SK-N-SH (cell line): ENCODE measurements at regions of chr1 and their contacts with region 1.

Region 1: GRCh38 chr1:111755331-111756123 is at the start of gene DDX20:
- DNase-seq: peak; percentile 97
- H3K4me3 ChIP-seq: peak within 1 kb of the TSS; percentile 96 to 99
- H3K27ac ChIP-seq: peak within 1 kb of the TSS; percentile 96 to 99
- H3K4me1 ChIP-seq: peaks cover 9 to 11% of the 10 kb centered on the region in 2 experiments; a peak in 3 of 4 replicates
- H3K27me3 ChIP-seq: no peaks in the 10 kb centered on the region
- CTCF ChIP-seq: peak; percentile 98
- EP300 ChIP-seq: peak in 1 of 2 experiments; percentile 39; a peak in 1 of 4 replicates
- RAD21 ChIP-seq: peak; percentile 72
- polyA plus RNA-seq, gene DDX20: 3.8 and 5.3 TPM in 2 replicates

Region 2: DNA sequence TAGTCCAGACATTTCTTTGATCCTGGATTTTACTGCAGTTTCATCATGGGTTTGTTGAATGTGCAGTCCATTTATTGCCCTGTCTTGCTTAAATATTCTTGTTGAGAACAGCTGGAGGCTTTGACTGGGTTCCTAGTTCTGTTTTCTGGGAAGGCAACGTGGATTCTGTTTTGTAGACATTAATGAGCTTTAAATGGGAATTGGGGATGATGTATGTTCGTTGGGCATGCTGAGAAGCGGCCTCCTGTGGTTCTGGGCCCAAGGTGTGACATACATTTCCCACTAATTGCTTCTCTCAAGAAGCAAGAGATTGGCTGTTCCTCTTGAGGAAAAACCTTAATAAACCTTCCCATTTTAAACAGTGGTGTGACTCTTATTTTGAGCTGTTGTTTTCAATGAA is 39.2 kb before region 1 on chr1:
- CTCF ChIA-PET with region 1: interaction called, 72 read pairs
- POLR2A ChIA-PET with region 1: interaction called, 3 read pairs
- DNase-seq: no peak
- H3K4me3 ChIP-seq: no peak overlapping the region
- H3K27ac ChIP-seq: no peak overlapping the region
- H3K4me1 ChIP-seq: no peaks in the 10 kb centered on the region
- H3K27me3 ChIP-seq: no peaks in the 10 kb centered on the region
- CTCF ChIP-seq: no peak
- EP300 ChIP-seq: no peak
- RAD21 ChIP-seq: no peak

Region 3: DNA sequence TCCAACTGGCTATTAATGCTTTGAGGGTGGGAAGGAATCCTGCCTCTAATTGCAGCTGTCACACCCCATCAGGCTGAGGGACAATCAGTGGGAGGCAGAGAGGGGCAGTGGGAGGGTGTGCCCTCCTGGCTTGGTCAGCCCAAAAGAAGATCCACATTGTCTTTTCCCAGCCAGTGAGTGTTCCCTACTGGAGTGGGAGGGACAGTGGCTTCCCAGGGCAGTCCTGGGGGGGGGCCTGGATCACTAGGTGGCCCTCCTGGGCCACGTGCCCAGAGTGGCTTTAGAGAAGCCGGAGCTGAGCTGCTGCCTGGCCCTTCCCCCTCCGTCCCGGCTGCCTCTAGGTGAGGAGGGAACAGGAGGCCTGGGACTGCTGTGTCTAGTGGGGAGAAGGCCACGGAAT is 30.3 kb before region 1 on chr1:
- CTCF ChIA-PET with region 1: interaction called, 11 read pairs
- POLR2A ChIA-PET with region 1: no interaction called
- DNase-seq: no peak
- H3K4me3 ChIP-seq: no peak overlapping the region
- H3K27ac ChIP-seq: no peak overlapping the region
- H3K4me1 ChIP-seq: no peaks in the 10 kb centered on the region
- H3K27me3 ChIP-seq: no peaks in the 10 kb centered on the region
- CTCF ChIP-seq: no peak
- EP300 ChIP-seq: no peak
- RAD21 ChIP-seq: no peak

Region 4: DNA sequence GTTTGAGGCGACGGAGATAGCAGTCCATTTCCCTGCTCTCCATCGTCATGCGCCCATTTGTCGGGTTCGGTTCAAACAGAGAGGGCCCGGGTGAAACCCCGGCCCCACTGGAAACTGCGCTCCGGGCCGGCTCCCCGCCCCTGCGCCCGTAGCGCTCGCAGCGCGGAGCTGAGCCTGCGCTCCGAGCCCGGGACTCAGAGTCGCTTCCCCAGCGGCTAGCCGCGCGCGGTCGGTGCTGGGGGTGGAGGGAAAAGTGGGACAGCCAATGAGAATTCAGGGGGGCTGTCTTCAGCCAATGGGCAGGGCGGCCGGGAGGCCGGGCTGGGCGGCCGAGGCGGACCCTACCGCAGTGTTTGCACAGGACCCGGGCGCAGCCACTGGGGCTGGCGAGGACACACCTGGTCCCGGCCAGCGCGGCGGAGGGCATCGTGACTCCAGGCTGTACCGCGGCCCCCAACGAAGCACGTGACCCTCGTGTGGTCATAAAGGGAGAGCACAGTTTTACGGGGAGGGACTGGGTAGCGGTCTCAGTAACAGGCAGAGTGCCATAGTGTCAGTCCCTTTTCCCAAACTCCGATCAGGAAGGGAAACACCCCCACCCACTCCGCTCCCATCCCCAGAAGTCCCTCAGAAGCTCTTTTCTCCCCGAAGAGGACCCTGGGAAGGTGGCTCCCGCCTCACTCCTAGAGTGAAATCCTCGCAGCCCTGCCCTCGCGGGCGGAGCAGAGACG is 16.2 kb before region 1 on chr1 and contains the start of gene INKA2:
- CTCF ChIA-PET with region 1: interaction called, 13 read pairs
- POLR2A ChIA-PET with region 1: interaction called, 19 read pairs
- DNase-seq: peak; percentile 94
- H3K4me3 ChIP-seq: peak within 1 kb of the TSS; percentile 66 to 85
- H3K27ac ChIP-seq: peak within 1 kb of the TSS; percentile 47 to 89
- H3K4me1 ChIP-seq: peaks cover 8 to 15% of the 10 kb centered on the region in 2 experiments; a peak in 3 of 4 replicates
- H3K27me3 ChIP-seq: no peaks in the 10 kb centered on the region
- CTCF ChIP-seq: no peak
- EP300 ChIP-seq: no peak
- RAD21 ChIP-seq: no peak
- polyA plus RNA-seq, gene INKA2: 1.1 and 1.2 TPM in 2 replicates